Right cardiac atrium (tissue), 5 donors: ENCODE measurements at regions of chr1 and their contacts with region 1.

Region 1: DNA sequence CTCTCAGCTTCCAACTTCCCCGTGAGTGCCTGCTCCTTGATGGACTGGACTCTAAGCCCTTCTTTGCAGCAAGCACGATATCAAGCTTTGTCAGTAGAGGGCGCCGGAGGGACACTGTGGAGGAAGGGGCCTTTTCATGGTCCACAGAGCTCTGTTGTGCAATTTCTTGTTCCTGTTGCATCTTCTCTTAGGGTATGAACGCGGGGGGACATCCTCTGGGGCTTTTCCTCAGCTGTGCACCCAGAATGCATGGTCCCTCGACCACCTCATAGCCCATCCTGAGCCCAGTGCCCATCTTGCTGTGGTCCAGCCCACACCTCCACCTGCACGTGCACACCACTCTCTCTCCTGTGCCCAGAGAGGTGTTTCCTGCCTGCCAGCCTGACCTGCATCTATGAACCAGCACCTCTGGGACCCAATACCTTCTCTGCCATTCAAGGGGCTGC is 556.8 kb downstream of the PTPRU start:
- DNase-seq: peak; percentile 75 to 89 (median 85)
- ATAC-seq: peak; percentile 63 to 83
- H3K4me3 ChIP-seq: no peak overlapping the region
- H3K27ac ChIP-seq: no peak overlapping the region
- H3K4me1 ChIP-seq: no peaks in the 10 kb centered on the region
- H3K27me3 ChIP-seq: no peaks in the 10 kb centered on the region

Region 2: DNA sequence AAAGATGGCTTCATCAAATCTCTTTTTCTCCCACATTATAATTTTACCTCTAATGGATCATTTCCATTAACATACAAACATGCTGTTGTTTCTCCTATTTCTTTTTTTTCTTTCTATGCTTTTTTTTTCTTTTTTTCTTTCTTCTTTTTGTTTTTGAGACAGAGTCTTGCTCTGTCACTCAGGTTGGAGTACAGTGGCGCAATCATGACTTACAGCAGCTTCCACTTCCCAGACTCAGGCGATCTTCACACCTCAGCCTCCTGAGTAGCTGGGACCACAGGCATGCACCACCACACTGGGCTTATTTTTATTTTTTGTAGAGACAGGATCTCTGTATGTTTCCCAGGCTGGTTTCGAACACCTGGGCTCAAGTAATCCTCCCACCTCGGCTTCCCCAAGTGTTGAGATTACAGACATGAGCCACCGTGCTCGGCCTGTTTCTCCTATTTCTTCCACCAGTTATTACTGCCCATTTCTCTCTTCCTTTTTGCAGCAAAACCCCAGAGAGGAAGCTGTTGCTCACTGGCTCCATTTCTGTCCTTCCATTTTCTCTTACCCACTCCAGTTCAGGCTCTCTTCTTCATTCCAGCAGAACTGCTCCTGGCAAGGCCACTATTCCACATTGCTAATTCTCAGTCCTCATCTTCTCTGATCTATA is 1013.2 kb before region 1 on chr1:
- intact Hi-C with region 1: no loop called
- DNase-seq: no peak
- ATAC-seq: no peak
- H3K4me3 ChIP-seq: no peak overlapping the region
- H3K27ac ChIP-seq: no peak overlapping the region
- H3K4me1 ChIP-seq: no peaks in the 10 kb centered on the region
- H3K27me3 ChIP-seq: no peaks in the 10 kb centered on the region

Region 3: GRCh38 chr1:29563571-29563970 is 229.6 kb before region 1 on chr1:
- intact Hi-C with region 1: no loop called
- DNase-seq: no peak
- ATAC-seq: no peak
- H3K4me3 ChIP-seq: no peak overlapping the region
- H3K27ac ChIP-seq: no peak overlapping the region
- H3K4me1 ChIP-seq: no peaks in the 10 kb centered on the region
- H3K27me3 ChIP-seq: no peaks in the 10 kb centered on the region

Region 4: GRCh38 chr1:29849038-29849750 is 56.1 kb after region 1 on chr1:
- intact Hi-C with region 1: no loop called
- DNase-seq: no peak
- ATAC-seq: no peak
- H3K4me3 ChIP-seq: no peak overlapping the region
- H3K27ac ChIP-seq: no peak overlapping the region
- H3K4me1 ChIP-seq: no peaks in the 10 kb centered on the region
- H3K27me3 ChIP-seq: no peaks in the 10 kb centered on the region

Region 5: DNA sequence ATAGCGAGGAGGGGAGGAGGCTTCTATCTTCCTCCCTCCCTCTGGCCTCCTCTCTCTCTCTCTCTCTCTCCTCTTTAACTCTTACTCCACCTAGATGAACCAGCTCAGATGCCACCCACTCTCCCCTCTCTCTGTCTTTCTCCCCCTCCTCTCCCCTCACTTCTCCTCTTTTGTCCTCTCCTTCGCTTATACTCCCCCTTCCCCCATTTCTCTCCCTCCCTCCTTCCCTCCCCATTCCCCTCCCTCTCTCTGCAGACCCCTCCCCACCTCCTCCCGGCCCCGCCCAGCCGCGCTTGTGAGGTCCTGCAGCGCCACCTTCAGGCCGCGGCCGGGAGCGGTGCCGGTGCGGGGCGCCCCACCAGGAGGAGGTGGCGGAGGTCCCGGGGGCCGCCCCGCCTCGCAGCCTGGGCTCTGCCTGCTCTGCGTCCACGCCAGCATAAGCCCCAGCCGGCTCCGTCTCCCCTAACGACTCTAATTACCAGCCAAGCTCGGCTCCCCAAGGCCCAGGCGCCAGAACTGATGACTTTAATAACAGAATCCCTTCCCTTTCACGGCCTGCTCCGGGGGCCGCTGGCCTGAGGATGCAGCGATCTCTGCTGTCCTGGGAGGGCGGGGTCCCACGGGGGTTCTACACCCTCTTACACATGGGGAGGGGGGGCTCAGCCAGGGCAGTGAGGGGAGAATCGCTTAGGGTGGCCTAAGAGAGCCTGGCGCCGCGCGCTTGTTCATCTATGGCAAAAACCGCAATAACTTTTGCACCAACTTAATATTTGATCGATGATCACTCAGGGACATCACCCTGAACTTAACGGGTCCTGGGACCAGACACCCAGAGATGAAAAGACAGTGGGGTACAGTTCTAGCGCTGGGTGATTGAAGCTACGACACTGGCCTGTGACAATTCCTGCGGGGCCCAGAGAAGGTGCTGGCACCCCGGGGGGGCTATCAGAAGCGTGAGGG is 293.0 kb after region 1 on chr1:
- intact Hi-C with region 1: loop called in 3 of 4 experiments (anchors 5 to 10 kb)
- DNase-seq: peak; percentile 65 to 88 (median 87)
- ATAC-seq: peak; percentile 38 to 59
- H3K4me3 ChIP-seq: no peak overlapping the region
- H3K27ac ChIP-seq: no peak overlapping the region
- H3K4me1 ChIP-seq: peaks cover 8% of the 10 kb centered on the region
- H3K27me3 ChIP-seq: no peaks in the 10 kb centered on the region

Region 6: DNA sequence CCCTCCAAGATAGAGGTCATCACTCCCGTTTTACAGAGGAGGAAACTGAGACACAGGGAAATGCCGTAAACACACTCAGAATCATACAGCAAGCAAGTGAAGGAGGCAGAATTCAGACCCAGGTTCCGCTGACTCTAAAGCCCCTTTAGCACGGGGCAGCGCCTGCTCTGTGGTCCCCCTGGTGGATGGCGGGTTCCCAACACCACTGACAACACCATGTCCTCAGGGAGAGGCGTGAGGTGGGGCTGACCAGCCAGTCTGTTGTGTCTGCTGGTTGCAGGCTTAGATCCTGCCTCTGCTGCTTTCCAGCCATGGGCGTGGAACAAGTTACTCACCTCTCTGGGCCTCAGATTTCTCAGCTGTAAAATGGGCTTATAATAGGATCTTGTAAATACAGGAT is 313.0 kb after region 1 on chr1:
- intact Hi-C with region 1: loop called in 3 of 4 experiments (anchors 5 to 10 kb)
- DNase-seq: peak in 2 of 3 donors; percentile 39 to 71
- ATAC-seq: peak in 1 of 2 donors; percentile 50
- H3K4me3 ChIP-seq: no peak overlapping the region
- H3K27ac ChIP-seq: no peak overlapping the region
- H3K4me1 ChIP-seq: no peaks in the 10 kb centered on the region
- H3K27me3 ChIP-seq: no peaks in the 10 kb centered on the region

Region 7: DNA sequence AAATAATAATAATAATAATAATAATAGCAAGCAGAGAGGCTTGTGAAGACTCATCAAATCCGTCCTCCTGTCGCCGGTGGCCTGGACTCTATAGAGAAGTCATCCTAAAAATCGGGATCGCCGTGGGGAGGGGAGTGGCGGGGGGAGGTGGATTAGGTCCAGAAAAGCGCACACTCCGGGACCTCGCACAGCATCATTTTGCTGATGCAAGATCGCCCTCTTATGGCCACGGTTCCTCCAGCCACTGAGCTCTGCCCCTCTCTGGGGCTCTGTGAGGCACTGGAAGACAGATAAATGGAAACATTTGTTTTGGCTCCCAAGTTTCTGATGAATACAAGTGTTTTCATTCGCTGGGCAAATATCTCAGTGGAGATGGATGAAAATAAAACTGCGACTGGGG is 318.3 kb after region 1 on chr1:
- intact Hi-C with region 1: loop called in 3 of 4 experiments (anchors 5 to 10 kb)
- DNase-seq: peak; percentile 55 to 71 (median 63)
- ATAC-seq: peak; percentile 65 to 77
- H3K4me3 ChIP-seq: no peak overlapping the region
- H3K27ac ChIP-seq: no peak overlapping the region
- H3K4me1 ChIP-seq: no peaks in the 10 kb centered on the region
- H3K27me3 ChIP-seq: no peaks in the 10 kb centered on the region